ENCODE measurements at regions of chr10 and their contacts with region 1.

Region 1: GRCh38 chr10:68792115-68792514 is 35.2 kb upstream of the STOX1 start:
- DNase-seq: no peak
- H3K4me3 Mint-ChIP-seq: no peak overlapping the region
- H3K27ac Mint-ChIP-seq: no peak overlapping the region
- H3K4me1 Mint-ChIP-seq: no peaks in the 10 kb centered on the region
- H3K27me3 Mint-ChIP-seq: no peaks in the 10 kb centered on the region
- CTCF ChIP-seq: no peak

Region 2: DNA sequence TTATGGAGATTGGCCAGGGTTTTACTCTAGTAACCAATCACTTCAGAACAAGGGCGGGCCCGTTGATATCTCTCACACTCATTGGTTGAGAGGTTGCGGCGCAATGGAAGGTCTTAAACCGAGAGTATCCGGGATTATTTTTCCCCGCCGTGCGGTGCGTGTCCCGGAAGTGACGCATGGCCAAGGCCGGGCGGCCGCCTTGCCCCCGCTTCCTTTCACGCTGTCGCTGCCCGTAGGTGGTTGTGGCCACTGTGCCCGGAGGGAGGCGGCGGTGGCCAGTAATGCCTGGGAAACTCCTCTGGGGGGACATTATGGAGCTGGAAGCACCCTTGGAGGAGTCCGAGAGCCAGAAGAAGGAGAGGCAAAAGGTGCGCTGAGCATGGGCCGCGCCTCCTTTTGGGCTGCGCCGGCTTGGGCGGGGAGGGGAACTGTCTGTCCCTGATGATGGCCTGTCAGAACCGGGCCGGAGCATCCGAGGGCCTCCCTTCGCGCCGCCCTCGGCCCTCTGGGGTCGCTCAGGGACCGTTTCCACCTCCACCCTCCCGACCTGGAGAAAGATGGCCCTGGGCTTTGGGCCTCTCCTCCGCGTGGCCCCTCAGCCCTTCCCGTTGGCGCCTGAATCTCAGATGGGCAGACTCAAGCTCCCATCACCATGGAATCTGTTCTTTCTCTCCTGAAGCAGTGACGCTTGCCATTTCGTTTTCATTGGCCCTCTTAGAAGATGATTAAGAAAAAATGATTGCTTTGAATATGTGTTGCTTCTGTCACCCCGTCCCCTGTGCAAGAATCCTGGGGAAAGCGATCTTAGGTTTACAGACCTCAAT is 109.2 kb after region 1 on chr10 and contains the start of gene DDX50:
- CTCF ChIA-PET with region 1: no interaction called
- intact Hi-C with region 1: loop called (anchors 1 kb)
- DNase-seq: peak; percentile 98
- H3K4me3 Mint-ChIP-seq: peak within 1 kb of the TSS; percentile 94
- H3K27ac Mint-ChIP-seq: peak within 1 kb of the TSS; percentile 90
- H3K4me1 Mint-ChIP-seq: peaks cover 28% of the 10 kb centered on the region
- H3K27me3 Mint-ChIP-seq: no peaks in the 10 kb centered on the region
- CTCF ChIP-seq: no peak
- total RNA-seq, gene DDX50: 39.1 and 44.4 TPM in 2 replicates

Measured in Calu3 (cell line).